Mammary epithelial cell (primary cell): ENCODE measurements at regions of chr5 and their contacts with region 1.

Region 1: GRCh38 chr5:157312492-157312891 is 46.6 kb downstream of the CYFIP2 start:
- DNase-seq: peak; percentile 47
- H3K4me3 ChIP-seq: no peak overlapping the region
- H3K27ac ChIP-seq: no peak overlapping the region
- H3K4me1 ChIP-seq: no peaks in the 10 kb centered on the region
- H3K27me3 ChIP-seq: no peaks in the 10 kb centered on the region
- CTCF ChIP-seq: peak; percentile 56 to 74

Region 2: DNA sequence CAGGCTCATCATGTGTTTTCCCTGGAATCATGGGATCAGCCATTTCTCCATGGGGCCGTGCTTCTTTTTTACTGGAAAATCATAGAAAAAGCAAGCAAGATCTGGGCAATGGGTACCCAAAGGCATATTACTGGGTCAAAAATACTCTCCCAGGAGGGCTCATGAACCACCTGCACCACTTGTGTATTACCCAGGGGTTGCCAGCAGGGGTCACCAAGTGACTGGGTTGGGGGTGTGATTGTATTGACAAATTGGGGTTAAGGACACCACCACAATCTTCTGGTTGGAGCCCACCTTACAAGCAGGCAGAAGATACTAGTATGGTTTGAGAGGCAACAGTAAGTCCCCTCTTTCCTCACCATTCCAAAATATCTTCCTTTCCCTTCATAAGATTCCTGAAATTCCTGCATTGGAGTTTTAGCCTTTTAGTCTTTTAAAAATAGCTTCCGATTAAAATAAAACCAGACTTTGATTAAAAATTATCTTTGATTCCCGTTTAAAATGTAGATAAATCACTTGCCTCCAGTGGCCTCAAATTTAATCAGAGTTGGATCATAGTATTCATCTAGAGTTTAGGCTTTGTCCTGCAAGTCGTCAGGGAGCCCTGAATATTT is 1695.6 kb before region 1 on chr5:
- CTCF ChIA-PET with region 1: no interaction called
- dilution Hi-C with region 1: no loop called
- in situ Hi-C with region 1: no loop called
- intact Hi-C with region 1: loop called (anchors 2 kb)
- DNase-seq: peak; percentile 14
- H3K4me3 ChIP-seq: no peak overlapping the region
- H3K27ac ChIP-seq: no peak overlapping the region
- H3K4me1 ChIP-seq: no peaks in the 10 kb centered on the region
- H3K27me3 ChIP-seq: no peaks in the 10 kb centered on the region
- CTCF ChIP-seq: peak; percentile 74 to 81

Region 3: GRCh38 chr5:156739881-156740280 is 572.6 kb before region 1 on chr5:
- CTCF ChIA-PET with region 1: no interaction called
- dilution Hi-C with region 1: no loop called
- in situ Hi-C with region 1: no loop called
- intact Hi-C with region 1: loop called (anchors 10 kb)
- DNase-seq: no peak
- H3K4me3 ChIP-seq: no peak overlapping the region
- H3K27ac ChIP-seq: no peak overlapping the region
- H3K4me1 ChIP-seq: no peaks in the 10 kb centered on the region
- H3K27me3 ChIP-seq: no peaks in the 10 kb centered on the region
- CTCF ChIP-seq: no peak

Region 4: GRCh38 chr5:157148734-157149615 is 163.5 kb before region 1 on chr5:
- CTCF ChIA-PET with region 1: interaction called, 3 read pairs
- dilution Hi-C with region 1: no loop called
- in situ Hi-C with region 1: no loop called
- intact Hi-C with region 1: loop called (anchors 2 kb)
- DNase-seq: peak; percentile 46
- H3K4me3 ChIP-seq: no peak overlapping the region
- H3K27ac ChIP-seq: no peak overlapping the region
- H3K4me1 ChIP-seq: no peaks in the 10 kb centered on the region
- H3K27me3 ChIP-seq: no peaks in the 10 kb centered on the region
- CTCF ChIP-seq: peak; percentile 90 to 94

Region 5: GRCh38 chr5:157253547-157253946 is 58.9 kb before region 1 on chr5:
- CTCF ChIA-PET with region 1: no interaction called
- dilution Hi-C with region 1: no loop called
- in situ Hi-C with region 1: loop called (anchors 5 to 10 kb)
- intact Hi-C with region 1: loop called (anchors 1 kb)
- DNase-seq: peak; percentile 29
- H3K4me3 ChIP-seq: no peak overlapping the region
- H3K27ac ChIP-seq: no peak overlapping the region
- H3K4me1 ChIP-seq: no peaks in the 10 kb centered on the region
- H3K27me3 ChIP-seq: no peaks in the 10 kb centered on the region
- CTCF ChIP-seq: peak; percentile 85 to 94

Region 6: GRCh38 chr5:157486221-157486681 is 173.8 kb after region 1 on chr5:
- CTCF ChIA-PET with region 1: no interaction called
- dilution Hi-C with region 1: no loop called
- in situ Hi-C with region 1: no loop called
- intact Hi-C with region 1: no loop called
- DNase-seq: no peak
- H3K4me3 ChIP-seq: no peak overlapping the region
- H3K27ac ChIP-seq: no peak overlapping the region
- H3K4me1 ChIP-seq: no peaks in the 10 kb centered on the region
- H3K27me3 ChIP-seq: no peaks in the 10 kb centered on the region
- CTCF ChIP-seq: no peak